ENCODE measurements at regions of chr6 and their contacts with region 1.

Region 1: GRCh38 chr6:45714741-45715507 is 300.7 kb downstream of the CLIC5 start:
- DNase-seq: peak in 1 of 2 donors; percentile 55
- H3K4me3 ChIP-seq: no peak overlapping the region
- CTCF ChIP-seq: peak in 1 of 3 donors; percentile 53
- POLR2A ChIP-seq: no peak

Region 2: GRCh38 chr6:44712353-44713111 is 1002.4 kb before region 1 on chr6:
- intact Hi-C with region 1: loop called (anchors 5 kb)
- DNase-seq: no peak
- H3K4me3 ChIP-seq: no peak overlapping the region
- CTCF ChIP-seq: no peak
- POLR2A ChIP-seq: no peak

Region 3: GRCh38 chr6:45421709-45422502 is 293.0 kb before region 1 on chr6:
- intact Hi-C with region 1: loop called (anchors 10 kb)
- DNase-seq: peak; percentile 40 to 89
- H3K4me3 ChIP-seq: peak overlapping the region; percentile 47
- CTCF ChIP-seq: no peak
- POLR2A ChIP-seq: no peak

Region 4: GRCh38 chr6:46023216-46023915 is 308.4 kb after region 1 on chr6:
- intact Hi-C with region 1: loop called (anchors 5 kb)
- DNase-seq: no peak
- H3K4me3 ChIP-seq: no peak overlapping the region
- CTCF ChIP-seq: no peak
- POLR2A ChIP-seq: no peak

Region 5: DNA sequence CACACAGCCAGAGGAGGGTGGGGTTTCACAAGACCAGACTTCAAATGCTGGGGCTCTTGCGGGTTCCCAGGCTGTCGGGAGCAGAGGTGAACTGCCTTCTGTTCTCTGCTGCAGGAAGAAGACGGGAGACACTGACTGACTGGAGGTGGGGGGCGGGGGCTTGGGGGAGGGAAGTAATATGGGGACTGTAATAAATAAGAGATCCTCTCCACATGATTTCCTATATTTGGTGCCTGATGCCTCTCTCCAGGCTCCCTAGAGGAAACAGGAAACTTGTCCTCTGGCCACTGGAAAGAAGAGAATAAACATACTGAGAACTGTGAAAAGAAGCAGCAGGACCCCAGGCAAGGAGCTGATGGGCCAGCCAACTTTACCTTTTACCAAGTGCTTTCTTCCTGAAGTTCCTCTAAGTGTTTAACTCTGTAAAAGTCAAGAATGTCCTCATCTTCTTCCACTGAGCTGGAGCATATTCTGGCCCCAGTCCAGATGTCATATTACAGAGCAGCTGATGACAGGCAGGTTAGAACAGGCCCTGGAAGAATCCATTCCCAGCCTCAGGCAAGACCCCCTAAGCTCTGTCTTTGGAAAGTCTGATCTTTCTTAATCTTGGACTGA is 1240.0 kb after region 1 on chr6:
- intact Hi-C with region 1: no loop called
- DNase-seq: no peak
- H3K4me3 ChIP-seq: no peak overlapping the region
- CTCF ChIP-seq: no peak
- POLR2A ChIP-seq: no peak

Region 6: GRCh38 chr6:47407348-47408281 is 1692.7 kb after region 1 on chr6:
- intact Hi-C with region 1: no loop called
- DNase-seq: no peak
- H3K4me3 ChIP-seq: no peak overlapping the region
- CTCF ChIP-seq: no peak
- POLR2A ChIP-seq: no peak

Measured in lower leg skin (tissue), 4 donors.